Activated naive CD4-positive, alpha-beta T cell treated with anti-CD3 and anti-CD28 coated beads for 36 hours (primary cell): ENCODE measurements at regions of chr11 and their contacts with region 1.

Region 1: DNA sequence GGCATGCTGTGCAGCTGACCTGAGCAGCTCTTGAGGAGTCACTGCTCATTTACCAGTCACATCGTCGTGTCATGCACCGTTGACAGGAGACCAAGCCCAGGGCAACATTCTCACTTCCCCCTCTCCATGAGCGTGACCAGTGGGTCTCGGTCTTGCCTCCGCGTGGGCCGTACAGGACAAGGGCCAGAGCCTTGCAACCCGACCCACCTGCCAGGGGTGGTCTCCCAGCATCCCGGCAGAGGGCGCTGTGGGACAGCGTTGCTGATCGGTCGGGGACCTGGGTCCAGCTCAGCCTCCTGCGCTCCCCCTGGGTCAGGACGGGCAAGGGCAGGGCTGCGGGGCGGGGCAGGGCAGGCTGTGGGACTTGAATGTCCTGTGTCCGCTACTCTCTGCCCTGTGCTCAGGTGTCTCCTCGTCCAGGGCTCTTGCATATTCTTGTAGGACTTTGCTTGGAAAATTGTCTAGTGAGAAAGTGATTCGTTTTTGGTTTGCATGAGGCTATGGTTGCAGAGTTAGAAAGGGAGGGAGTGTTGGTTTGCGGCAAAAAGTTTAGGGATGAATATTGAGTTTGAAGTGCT is 16.2 kb downstream of the EIF4G2 start:
- DNase-seq: peak; percentile 90
- H3K4me3 Mint-ChIP-seq: no peak overlapping the region
- H3K27ac Mint-ChIP-seq: no peak overlapping the region
- H3K4me1 Mint-ChIP-seq: peaks cover 14% of the 10 kb centered on the region
- H3K27me3 Mint-ChIP-seq: no peaks in the 10 kb centered on the region

Region 2: DNA sequence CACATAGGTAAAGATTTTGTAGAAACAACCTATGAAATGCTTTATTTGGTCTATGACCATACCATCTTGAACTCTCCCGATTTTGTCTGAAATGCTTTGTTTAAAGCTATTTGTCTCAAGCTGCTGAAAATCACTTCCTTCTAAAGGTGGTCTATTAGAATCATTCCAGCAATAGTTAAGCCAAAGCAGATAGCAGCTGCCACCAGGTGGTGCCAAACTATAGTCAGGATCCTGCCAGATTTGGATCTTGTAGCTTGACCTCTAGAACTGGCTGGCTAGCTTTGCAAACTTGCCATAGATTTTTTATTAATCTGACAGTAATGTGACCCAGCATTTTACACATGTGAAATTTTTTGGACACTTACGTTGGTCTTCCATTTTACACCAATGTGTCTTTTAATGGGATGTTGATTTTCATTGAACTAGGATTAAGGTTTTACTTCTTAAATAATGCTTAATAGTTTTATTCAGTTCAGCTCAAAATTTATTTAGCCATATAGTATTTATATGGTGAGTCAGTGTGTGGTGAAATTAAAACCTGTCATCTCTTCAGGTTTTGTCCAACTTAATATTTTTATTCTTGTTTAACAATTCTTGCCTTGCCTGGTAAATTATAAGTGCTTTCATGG is 21.7 kb before region 1 on chr11:
- CTCF ChIA-PET with region 1: interaction called, 14 read pairs
- intact Hi-C with region 1: no loop called
- DNase-seq: peak; percentile 42
- H3K4me3 Mint-ChIP-seq: no peak overlapping the region
- H3K27ac Mint-ChIP-seq: no peak overlapping the region
- H3K4me1 Mint-ChIP-seq: no peaks in the 10 kb centered on the region
- H3K27me3 Mint-ChIP-seq: no peaks in the 10 kb centered on the region

Region 3: DNA sequence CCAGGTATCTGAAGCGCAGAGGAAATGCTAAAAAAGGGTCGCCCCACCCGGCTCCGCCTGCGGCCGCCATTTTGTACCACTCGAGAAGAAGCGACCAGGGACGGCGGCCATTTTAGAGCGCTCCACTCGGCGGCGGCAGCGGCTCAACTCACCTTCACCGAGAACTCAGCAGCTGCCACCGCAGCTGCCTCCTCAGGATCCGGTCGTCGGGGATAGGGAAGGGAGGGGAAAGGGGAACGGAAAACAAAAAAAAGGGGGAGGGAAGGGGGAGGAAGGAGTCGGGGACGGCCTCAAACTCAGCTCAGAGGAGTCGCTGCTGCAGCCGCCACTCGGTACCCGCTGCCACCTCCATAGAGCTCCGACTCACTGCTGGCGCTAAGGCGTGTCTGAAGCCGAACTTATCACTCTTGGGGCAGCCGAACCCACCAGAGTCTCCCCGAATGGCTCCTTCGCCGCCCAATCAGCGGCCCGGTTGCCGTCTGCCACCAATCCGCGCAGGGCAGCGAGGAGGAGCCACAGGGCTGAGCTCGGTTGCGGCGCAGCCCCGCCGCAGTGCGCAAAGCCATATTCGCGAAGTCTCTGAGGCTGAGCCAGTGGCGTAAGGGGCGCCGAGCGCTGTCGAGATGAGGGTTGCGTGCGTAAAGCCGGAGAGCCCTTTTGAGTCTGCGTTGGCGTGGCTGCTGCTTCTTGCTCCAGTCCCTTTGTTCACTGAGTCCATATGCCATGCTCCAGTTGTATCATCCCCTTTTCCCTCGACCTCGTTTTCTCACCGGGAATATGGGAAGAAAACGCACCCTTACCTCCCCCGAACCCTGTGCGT is 16.3 kb after region 1 on chr11 and contains the start of gene EIF4G2:
- CTCF ChIA-PET with region 1: interaction called, 32 read pairs
- intact Hi-C with region 1: no loop called
- DNase-seq: peak; percentile 98
- H3K4me3 Mint-ChIP-seq: peak within 1 kb of the TSS; percentile 95
- H3K27ac Mint-ChIP-seq: peak within 1 kb of the TSS; percentile 97
- H3K4me1 Mint-ChIP-seq: peaks cover 43% of the 10 kb centered on the region
- H3K27me3 Mint-ChIP-seq: no peaks in the 10 kb centered on the region
- total RNA-seq, gene EIF4G2: 640 to 734 TPM

Region 4: GRCh38 chr11:10913075-10913474 is 120.6 kb after region 1 on chr11:
- CTCF ChIA-PET with region 1: interaction called, 10 read pairs
- intact Hi-C with region 1: no loop called
- DNase-seq: no peak
- H3K4me3 Mint-ChIP-seq: no peak overlapping the region
- H3K27ac Mint-ChIP-seq: no peak overlapping the region
- H3K4me1 Mint-ChIP-seq: no peaks in the 10 kb centered on the region
- H3K27me3 Mint-ChIP-seq: no peaks in the 10 kb centered on the region

Region 5: GRCh38 chr11:11028017-11028692 is 235.7 kb after region 1 on chr11:
- CTCF ChIA-PET with region 1: interaction called, 26 read pairs
- intact Hi-C with region 1: no loop called
- DNase-seq: peak; percentile 88
- H3K4me3 Mint-ChIP-seq: no peak overlapping the region
- H3K27ac Mint-ChIP-seq: no peak overlapping the region
- H3K4me1 Mint-ChIP-seq: no peaks in the 10 kb centered on the region
- H3K27me3 Mint-ChIP-seq: no peaks in the 10 kb centered on the region

Region 6: DNA sequence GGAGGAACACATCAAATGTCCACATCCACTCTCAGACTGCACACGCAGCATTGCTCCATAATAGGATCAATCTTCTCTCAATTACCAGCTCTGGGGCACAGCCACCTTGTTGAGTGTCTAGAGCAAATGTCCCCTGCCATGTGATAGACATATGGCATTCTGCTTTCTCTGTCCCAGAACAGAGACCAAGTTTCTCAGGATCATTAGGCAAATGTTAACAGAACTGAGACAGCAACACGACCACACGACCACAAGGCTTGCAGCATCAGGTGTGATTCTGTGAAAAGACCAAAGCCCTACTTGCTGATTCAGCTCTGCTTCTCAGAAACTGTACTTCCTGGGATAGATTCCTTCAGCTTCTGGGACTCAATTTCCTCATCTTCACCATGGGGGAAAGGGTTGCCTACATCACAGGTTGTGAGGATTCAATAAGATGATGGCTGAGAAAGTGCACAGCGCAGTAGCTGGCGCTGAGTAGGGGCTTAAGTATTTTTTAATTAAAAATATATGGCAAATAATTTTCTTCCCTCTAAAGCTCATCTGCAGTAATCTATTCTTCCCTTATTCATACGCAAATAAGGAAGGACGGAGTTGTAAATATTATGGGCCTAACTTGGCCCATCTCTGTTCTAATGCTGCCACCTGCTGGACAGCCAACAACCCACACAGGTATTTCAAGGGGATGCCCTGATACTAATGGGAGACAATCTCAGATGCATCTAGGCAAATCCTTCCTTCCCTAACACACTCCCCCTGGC is 995.0 kb after region 1 on chr11:
- CTCF ChIA-PET with region 1: no interaction called
- intact Hi-C with region 1: loop called (anchors 1 kb)
- DNase-seq: peak; percentile 83
- H3K4me3 Mint-ChIP-seq: no peak overlapping the region
- H3K27ac Mint-ChIP-seq: no peak overlapping the region
- H3K4me1 Mint-ChIP-seq: no peaks in the 10 kb centered on the region
- H3K27me3 Mint-ChIP-seq: peaks cover 3% of the 10 kb centered on the region